SK-N-SH (cell line): ENCODE measurements at regions of chr9 and their contacts with region 1.

Region 1: DNA sequence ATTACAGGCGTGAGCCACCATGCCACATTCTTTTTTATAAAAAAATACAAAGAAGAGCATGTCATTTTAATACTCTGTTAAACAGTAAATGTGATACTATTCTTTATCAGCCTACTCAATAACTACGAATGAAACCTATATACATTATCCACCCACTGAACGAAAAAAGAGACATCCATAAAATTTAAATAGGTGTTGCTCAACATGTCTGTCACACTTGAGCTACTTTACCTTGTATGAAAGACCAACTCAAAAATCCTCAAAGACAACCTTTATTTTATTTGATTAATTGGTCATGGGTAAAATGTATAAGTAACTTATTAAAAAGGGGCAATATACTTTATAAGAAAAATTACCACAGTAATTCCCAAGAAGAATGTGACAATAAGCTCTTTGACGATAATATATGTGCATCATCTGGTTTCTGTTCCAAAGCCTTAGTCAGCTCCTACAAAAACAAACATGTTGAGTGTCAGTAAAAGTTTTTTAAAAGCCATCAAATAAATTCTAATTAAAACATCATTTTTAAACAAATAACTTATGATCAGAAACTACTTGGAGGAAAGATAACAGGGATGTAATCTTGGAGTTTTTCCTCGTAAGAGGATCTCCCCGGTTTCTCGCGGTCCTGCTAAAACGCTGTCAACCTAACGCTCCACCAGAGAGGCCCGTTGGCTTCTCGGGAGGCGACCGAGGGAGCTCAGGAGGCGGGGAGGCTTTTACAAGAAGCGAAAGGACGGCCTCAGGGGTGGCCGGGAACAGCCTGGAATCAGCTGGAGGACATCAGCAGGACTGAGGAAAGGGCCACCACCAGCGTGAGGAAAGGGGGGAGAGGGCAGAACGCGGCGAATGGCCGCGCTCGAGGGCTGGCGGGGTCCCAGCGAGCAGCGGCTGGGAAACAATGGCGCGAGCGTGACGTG is 13.5 kb upstream of the ANKRD18B start:
- DNase-seq: peak; percentile 77
- H3K4me3 ChIP-seq: peak overlapping the region; percentile 60 to 70
- H3K27ac ChIP-seq: peak overlapping the region; percentile 93 to 98
- H3K4me1 ChIP-seq: peaks cover 0 to 9% of the 10 kb centered on the region in 2 experiments
- H3K27me3 ChIP-seq: no peaks in the 10 kb centered on the region
- CTCF ChIP-seq: no peak
- EP300 ChIP-seq: no peak
- RAD21 ChIP-seq: no peak

Region 2: GRCh38 chr9:33489066-33489465 is 21.5 kb before region 1 on chr9:
- CTCF ChIA-PET with region 1: no interaction called
- POLR2A ChIA-PET with region 1: no interaction called
- DNase-seq: no peak
- H3K4me3 ChIP-seq: no peak overlapping the region
- H3K27ac ChIP-seq: 0 out of 4 replicates have a peak overlapping the region, but pooled peaks of 1 of the 2 experiments have one; percentile 3
- H3K4me1 ChIP-seq: no peaks in the 10 kb centered on the region
- H3K27me3 ChIP-seq: no peaks in the 10 kb centered on the region
- CTCF ChIP-seq: no peak
- EP300 ChIP-seq: no peak
- RAD21 ChIP-seq: no peak

Region 3: DNA sequence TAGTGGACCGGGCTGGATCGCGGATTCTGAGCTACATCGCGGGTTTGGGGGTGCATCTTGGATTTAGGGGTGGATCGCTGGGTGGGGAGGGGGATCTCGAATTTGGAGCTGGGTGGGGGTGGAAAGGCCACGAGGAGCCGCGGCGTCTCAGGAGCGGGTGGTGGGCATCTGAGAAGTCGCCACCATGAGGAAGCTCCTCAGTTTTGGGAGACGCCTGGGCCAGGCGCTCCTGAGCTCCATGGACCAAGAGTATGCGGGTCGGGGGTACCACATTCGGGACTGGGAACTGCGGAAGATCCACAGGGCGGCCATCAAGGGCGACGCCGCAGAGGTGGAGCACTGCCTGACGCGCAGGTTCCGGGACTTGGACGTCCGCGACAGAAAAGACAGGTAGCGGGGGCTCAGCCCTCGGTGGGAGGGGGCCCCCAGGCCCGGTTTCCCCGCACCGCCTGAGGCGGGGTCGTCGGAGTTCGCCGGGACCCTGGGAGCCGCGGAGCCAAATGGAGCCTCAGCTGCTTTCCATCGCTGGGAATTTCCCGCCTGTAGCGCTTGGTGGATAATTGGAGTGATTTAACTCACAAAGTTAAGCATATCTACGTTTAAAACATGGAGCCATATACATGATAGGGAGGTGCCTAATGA is 13.9 kb after region 1 on chr9:
- CTCF ChIA-PET with region 1: no interaction called
- POLR2A ChIA-PET with region 1: interaction called, 14 read pairs
- DNase-seq: no peak
- H3K4me3 ChIP-seq: peak overlapping the region; percentile 71 to 74
- H3K27ac ChIP-seq: peak overlapping the region; percentile 40 to 85; a peak in 3 of 4 replicates
- H3K4me1 ChIP-seq: peaks cover 0 to 2% of the 10 kb centered on the region in 2 experiments; a peak in 2 of 4 replicates
- H3K27me3 ChIP-seq: no peaks in the 10 kb centered on the region
- CTCF ChIP-seq: no peak
- EP300 ChIP-seq: no peak
- RAD21 ChIP-seq: no peak

Region 4: DNA sequence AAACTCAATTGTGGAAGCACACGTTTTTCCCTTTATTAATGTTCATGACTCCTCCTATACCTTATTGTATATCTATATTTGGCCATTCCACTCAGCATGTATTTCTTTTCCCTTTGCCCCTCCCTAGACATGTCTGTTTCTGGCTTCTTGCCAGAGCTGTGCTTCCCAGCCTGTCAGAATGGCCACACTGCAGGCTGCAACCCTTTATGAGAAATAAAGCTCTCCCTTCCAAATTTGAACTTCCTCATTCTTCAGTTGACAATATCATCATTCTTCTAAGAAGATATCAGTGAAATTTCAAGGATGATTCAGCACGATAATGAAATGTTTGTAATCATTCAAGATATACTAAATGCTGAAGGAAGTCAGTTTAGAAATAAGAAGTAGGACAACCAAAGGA is 177.3 kb after region 1 on chr9:
- CTCF ChIA-PET with region 1: no interaction called
- POLR2A ChIA-PET with region 1: no interaction called
- DNase-seq: no peak
- H3K4me3 ChIP-seq: no peak overlapping the region
- H3K27ac ChIP-seq: no peak overlapping the region
- H3K4me1 ChIP-seq: no peaks in the 10 kb centered on the region; a peak in 1 of 4 replicates
- H3K27me3 ChIP-seq: no peaks in the 10 kb centered on the region
- CTCF ChIP-seq: no peak
- EP300 ChIP-seq: no peak
- RAD21 ChIP-seq: no peak

Region 5: DNA sequence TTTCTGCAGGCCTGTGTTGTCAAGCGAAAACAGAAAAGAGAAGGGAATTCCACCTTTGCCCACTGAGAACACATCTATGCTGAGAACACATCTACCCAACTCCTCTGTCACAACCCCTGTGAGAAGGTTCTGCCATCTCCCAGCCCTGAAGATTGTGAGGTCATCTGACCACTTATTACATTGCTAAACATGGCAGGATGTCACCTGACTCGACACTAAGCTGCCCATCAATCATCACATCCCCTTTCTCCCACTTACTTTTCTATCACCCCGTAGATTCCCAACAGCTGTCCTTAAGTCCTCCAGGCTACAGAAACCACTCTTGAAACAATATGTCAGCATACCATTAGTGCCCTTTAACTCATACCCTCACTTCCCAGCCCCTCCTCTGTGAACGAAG is 220.6 kb after region 1 on chr9:
- CTCF ChIA-PET with region 1: no interaction called
- POLR2A ChIA-PET with region 1: no interaction called
- DNase-seq: no peak
- H3K4me3 ChIP-seq: no peak overlapping the region
- H3K27ac ChIP-seq: no peak overlapping the region
- H3K4me1 ChIP-seq: peaks cover 0 to 5% of the 10 kb centered on the region in 2 experiments; a peak in 1 of 4 replicates
- H3K27me3 ChIP-seq: no peaks in the 10 kb centered on the region
- CTCF ChIP-seq: no peak
- EP300 ChIP-seq: no peak
- RAD21 ChIP-seq: no peak